Transverse colon (tissue), 4 donors: ENCODE measurements at regions of chr6 and their contacts with region 1.

Region 1: DNA sequence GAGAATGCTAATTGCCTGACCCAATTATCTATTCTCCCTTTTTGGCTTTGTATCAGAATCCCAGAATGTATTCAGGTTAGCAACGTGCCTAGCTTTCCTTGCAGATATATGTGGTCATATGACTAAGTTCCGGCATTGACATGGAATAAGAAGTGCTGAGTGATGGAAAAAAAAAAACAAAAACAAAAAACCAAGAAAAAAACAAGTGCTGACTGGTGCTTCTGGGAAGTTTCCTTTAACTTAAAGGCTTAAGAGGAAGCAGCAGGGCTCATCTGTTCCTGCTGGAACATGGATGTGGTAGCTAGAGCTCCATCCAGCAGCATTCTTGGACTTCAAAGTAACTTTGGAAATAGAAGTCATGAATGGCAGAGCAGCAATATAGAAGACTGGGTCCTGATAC is 10.4 kb upstream of the RPF2 start:
- DNase-seq: no peak
- H3K4me3 ChIP-seq: no peak overlapping the region
- H3K27ac ChIP-seq: no peak overlapping the region
- H3K4me1 ChIP-seq: no peaks in the 10 kb centered on the region
- H3K27me3 ChIP-seq: no peaks in the 10 kb centered on the region
- CTCF ChIP-seq: no peak
- EP300 ChIP-seq: no peak
- POLR2A ChIP-seq: no peak

Region 2: DNA sequence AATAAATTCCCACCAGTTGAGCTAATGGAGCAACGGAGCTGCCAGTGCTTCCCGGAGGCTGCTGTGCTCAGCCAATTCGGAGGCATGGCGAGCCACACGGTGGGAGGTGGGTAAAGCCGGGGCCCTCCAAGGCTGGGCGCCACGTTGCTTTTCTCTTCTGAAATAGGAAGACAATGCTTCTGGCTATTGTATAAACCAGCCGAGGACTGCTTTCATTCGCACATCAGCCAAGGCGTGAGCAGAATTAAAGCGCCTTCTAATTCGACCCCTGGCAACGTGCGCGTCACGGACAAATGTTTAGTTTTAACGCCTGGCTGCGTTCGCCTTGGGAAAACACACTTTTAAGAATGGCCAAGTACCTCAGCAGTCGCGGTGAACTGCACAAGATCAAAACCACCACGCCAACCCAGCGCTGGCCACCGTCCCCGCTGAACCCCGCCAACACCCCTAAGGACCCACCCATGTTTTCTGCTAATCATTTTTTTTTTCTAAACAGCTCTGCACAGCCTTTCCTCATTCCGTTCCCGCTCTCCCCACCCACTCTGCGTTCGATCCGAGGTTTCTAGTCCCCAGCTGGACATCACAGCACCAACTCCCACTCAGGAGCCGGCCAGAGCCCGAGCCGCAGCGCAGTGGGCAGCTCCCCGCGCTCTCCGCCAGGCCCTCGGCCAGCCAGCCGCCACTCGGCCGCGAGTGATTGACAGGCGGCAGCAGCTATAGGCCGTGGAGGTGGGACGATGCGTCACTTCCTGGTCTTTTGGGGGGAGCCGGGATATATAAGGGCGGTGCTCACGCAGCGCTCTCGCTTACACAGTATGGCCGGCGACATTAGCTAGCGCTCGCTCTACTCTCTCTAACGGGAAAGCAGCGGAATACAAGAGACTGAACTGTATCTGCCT is 97.2 kb before region 1 on chr6 and contains the start of gene AMD1:
- in situ Hi-C with region 1: no loop called
- intact Hi-C with region 1: loop called (anchors 10 kb)
- DNase-seq: peak; percentile 97
- H3K4me3 ChIP-seq: peak within 1 kb of the TSS; percentile 78 to 95 (median 90)
- H3K27ac ChIP-seq: peak within 1 kb of the TSS; percentile 94 to 99 (median 97)
- H3K4me1 ChIP-seq: peaks cover 11 to 33% (median 26%) of the 10 kb centered on the region in 4 donors
- H3K27me3 ChIP-seq: no peaks in the 10 kb centered on the region
- CTCF ChIP-seq: peak in 2 of 5 experiments; percentile 6 to 42
- EP300 ChIP-seq: no peak
- POLR2A ChIP-seq: peak; percentile 100
- total RNA-seq, gene AMD1: 50.7 to 86.4 (median 75.1) TPM